ENCODE measurements at regions of chr10 and their contacts with region 1.

Region 1: DNA sequence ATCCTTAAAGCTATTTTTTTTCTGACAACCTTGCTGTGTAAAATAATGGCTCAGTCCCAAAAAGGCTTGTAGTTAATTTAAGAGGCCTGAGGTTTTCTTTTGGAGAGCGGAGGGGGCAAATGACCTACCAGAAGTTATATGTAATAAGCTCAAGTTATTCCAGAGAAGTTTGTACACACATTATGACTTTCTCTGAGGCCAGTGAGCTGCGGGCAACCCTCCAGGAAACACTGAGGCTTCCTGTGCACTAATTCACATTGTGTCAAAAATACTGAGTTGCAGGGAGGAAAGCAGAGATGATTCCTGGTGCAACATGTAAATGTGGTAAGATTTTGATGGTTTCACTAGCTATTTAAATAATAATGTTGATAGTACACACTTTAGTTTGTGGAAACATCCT is 188.6 kb downstream of the DIP2C start:
- DNase-seq: no peak
- ATAC-seq: no peak
- H3K4me3 Mint-ChIP-seq: no peak overlapping the region
- H3K27ac Mint-ChIP-seq: no peak overlapping the region
- H3K4me1 Mint-ChIP-seq: peaks cover 26% of the 10 kb centered on the region
- H3K27me3 Mint-ChIP-seq: peaks cover 4% of the 10 kb centered on the region

Region 2: GRCh38 chr10:536371-536925 is 35.6 kb after region 1 on chr10:
- CTCF ChIA-PET with region 1: no interaction called
- POLR2A ChIA-PET with region 1: no interaction called
- intact Hi-C with region 1: loop called in 1 of 2 experiments (anchors 1 kb)
- DNase-seq: no peak
- ATAC-seq: no peak
- H3K4me3 Mint-ChIP-seq: no peak overlapping the region
- H3K27ac Mint-ChIP-seq: no peak overlapping the region
- H3K4me1 Mint-ChIP-seq: no peaks in the 10 kb centered on the region
- H3K27me3 Mint-ChIP-seq: peaks cover 19% of the 10 kb centered on the region

Region 3: GRCh38 chr10:964321-964987 is 463.6 kb after region 1 on chr10:
- CTCF ChIA-PET with region 1: no interaction called
- POLR2A ChIA-PET with region 1: no interaction called
- intact Hi-C with region 1: no loop called
- DNase-seq: no peak
- ATAC-seq: no peak
- H3K4me3 Mint-ChIP-seq: no peak overlapping the region
- H3K27ac Mint-ChIP-seq: no peak overlapping the region
- H3K4me1 Mint-ChIP-seq: peaks cover 7% of the 10 kb centered on the region
- H3K27me3 Mint-ChIP-seq: no peaks in the 10 kb centered on the region